ENCODE measurements at regions of chr11 and their contacts with region 1.

Region 1: GRCh38 chr11:100855466-100856067 is 168.5 kb downstream of the ARHGAP42 start:
- DNase-seq: no peak
- H3K4me3 ChIP-seq: no peak overlapping the region
- H3K27ac ChIP-seq: no peak overlapping the region
- H3K4me1 ChIP-seq: no peaks in the 10 kb centered on the region
- H3K27me3 ChIP-seq: no peaks in the 10 kb centered on the region
- CTCF ChIP-seq: peak; percentile 55

Region 2: GRCh38 chr11:100575870-100576705 is 279.5 kb before region 1 on chr11:
- intact Hi-C with region 1: loop called (anchors 2 kb)
- DNase-seq: peak; percentile 29
- H3K4me3 ChIP-seq: no peak overlapping the region
- H3K27ac ChIP-seq: no peak overlapping the region
- H3K4me1 ChIP-seq: no peaks in the 10 kb centered on the region
- H3K27me3 ChIP-seq: no peaks in the 10 kb centered on the region
- CTCF ChIP-seq: peak; percentile 62

Region 3: DNA sequence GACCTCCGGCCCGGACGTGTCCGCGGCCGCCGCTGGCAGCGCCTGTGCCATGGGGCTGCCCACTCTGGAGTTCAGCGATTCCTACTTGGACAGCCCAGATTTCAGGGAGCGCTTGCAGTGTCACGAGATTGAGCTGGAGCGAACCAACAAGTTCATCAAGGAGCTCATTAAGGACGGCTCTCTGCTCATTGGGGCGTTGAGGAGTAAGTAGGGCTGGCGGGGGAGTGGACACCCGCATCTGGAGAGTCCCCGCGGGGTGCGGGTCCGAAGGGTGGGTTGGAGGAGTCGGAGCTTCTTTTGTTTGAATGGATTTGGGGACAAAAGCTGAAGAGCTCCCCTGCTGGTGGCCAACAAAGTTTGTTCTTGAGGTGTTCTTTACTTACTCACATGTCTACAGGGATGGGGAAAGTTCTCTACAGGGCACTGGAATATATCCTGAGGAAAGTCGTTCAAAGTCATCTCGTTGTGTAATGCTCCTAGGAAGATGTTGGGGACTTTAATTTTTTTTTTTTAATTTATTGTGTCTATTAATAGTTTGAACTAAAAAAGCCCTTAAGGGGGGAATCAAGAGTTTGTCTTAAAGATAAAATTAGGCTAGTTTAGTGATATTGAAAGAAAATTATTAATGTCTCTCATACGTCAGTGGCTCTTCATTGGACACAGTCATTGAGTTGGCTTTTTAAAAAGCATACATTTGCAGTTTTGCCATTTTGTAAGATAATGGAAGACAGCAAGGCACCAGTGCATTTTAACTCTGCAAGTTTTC is 167.8 kb before region 1 on chr11:
- intact Hi-C with region 1: loop called (anchors 5 kb)
- DNase-seq: peak; percentile 71
- H3K4me3 ChIP-seq: peak overlapping the region; percentile 72
- H3K27ac ChIP-seq: peak overlapping the region; percentile 66
- H3K4me1 ChIP-seq: no peaks in the 10 kb centered on the region
- H3K27me3 ChIP-seq: no peaks in the 10 kb centered on the region
- CTCF ChIP-seq: peak; percentile 62

Measured in colonic mucosa (tissue), 4 donors.